AG04449 (cell line): ENCODE measurements at regions of chr3 and their contacts with region 1.

Region 1: DNA sequence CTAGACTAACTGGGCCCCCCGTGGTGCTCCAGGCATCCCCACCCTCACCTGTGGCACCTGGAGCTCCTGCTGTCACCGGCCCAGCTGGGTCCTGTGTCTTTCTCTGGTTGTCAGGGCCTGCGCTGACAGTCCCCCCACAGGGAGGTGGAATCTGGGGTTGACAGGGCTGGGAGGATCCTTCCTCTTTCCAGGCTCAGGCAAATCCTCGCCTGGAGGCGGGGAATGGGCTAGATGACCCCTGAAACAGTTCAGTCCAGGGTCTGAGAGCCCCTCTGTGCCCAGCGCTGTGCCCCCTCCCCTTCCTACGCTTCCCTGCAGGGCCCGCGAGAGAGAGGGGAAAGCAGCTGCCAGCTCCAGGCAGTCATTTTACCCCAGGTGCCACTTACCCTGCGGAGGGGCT is 50.1 kb upstream of the MCF2L2 start:
- DNase-seq: no peak
- H3K4me3 ChIP-seq: no peak overlapping the region
- CTCF ChIP-seq: no peak

Region 2: DNA sequence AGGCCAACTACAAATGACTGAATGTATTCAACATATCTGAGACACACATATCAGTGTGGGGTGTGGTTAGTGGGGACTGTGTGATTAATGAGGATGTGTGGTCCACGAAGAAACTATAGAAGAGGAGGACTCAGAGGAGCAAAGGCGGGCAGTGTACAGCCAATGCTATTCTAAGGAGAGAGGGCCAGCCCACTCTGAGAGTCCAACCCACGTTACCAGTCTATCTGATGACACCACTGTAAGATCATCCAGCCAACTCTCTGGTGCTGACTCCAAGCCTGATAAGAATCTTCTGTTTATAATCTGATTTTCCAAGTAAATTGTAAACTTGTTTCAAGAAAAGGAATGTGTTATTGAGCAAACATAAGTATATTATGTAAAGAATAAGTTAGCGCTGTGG is 97.3 kb before region 1 on chr3:
- CTCF ChIA-PET with region 1: no interaction called
- POLR2A ChIA-PET with region 1: no interaction called
- DNase-seq: no peak
- H3K4me3 ChIP-seq: no peak overlapping the region
- CTCF ChIP-seq: no peak

Region 3: DNA sequence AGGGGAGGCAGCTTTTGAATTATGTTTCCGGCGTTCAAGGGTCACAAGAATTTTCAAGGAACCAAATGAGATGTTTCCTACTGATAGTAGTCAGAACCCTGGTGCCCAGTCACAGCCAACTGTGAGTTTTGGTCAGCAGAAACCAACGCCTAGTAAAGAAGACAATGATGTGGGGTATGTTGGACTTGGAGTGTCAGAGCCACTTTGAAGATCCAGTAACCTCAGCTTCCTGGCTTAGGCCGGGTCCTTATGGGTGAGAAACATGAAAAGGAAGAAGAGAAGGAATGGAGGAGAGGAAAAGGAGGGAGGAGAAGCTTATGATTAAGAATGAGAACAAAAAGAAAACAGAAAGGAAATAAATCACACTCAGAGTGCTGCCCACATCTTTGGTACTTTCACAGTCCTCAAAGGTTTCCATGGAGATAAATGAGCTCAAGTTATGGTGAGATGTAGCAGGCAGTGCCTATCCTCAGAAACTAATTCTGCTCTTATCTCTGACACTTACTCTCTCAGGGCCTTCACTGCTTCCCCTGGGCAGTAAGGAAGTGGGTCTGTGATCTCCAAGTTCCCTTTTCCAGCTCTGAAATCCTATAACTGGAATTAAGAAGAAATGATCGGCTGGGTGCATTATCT is 48.1 kb before region 1 on chr3:
- CTCF ChIA-PET with region 1: no interaction called
- POLR2A ChIA-PET with region 1: no interaction called
- DNase-seq: no peak
- H3K4me3 ChIP-seq: no peak overlapping the region
- CTCF ChIP-seq: no peak

Region 4: DNA sequence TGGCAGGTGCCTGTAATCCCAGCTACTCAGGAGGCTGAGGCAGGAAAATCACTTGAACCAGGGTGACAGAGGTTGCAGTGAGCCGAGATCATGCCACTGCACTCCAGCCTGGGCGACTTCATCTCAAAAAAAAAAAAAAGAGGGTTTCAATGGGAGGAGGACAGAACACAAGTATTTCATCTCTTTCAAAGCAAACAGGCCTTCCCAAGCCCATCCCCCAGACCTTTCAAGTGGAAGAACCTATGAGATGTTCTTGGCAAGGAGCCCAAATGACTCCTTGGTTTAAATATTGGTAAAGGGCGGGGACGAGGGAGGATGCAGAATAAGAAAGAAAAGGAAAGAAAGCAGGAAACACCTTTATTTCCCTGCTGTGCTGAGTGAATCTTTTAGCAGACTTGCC is 12.2 kb after region 1 on chr3:
- CTCF ChIA-PET with region 1: interaction called, 15 read pairs
- POLR2A ChIA-PET with region 1: no interaction called
- DNase-seq: no peak
- H3K4me3 ChIP-seq: no peak overlapping the region
- CTCF ChIP-seq: no peak

Region 5: GRCh38 chr3:183527428-183528379 is 49.2 kb after region 1 on chr3:
- CTCF ChIA-PET with region 1: no interaction called
- POLR2A ChIA-PET with region 1: no interaction called
- DNase-seq: no peak
- H3K4me3 ChIP-seq: no peak overlapping the region
- CTCF ChIP-seq: no peak